Activated CD4-positive, alpha-beta T cell treated with anti-CD3 and anti-CD28 coated beads, Interleukin-2, amount 10 ng/mL, durations not matched to agents 24 days and 14 days (primary cell): ENCODE measurements at regions of chr17 and their contacts with region 1.

Region 1: DNA sequence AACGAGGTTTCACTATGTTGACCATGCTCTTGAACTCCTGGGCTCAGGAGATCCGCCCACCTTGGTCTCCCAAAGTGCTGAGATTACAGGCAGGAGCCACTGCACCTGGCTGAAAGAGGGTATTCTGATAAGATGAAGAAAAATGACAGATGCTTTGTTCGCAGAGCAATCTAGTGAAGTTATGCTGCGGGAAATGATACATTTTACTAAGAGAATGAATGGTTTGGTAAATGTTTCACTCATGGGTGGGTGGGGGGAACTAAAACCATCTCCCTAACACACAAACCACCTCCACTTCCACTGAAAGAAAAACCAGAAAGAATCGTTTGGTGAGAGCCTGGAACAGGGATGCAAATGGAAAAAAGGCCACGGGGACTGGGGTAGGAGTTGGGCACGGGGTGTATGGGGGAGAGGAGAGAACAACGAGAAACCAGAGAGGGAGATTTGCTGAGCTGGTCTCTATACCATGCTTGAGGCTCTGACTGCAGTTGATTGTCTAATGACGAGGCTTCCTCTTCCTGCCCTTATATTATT is 19.0 kb upstream of the XYLT2 start:
- DNase-seq: no peak
- H3K4me3 Mint-ChIP-seq: no peak overlapping the region
- H3K27ac Mint-ChIP-seq: peak overlapping the region; percentile 73
- H3K4me1 Mint-ChIP-seq: peaks cover 7% of the 10 kb centered on the region
- H3K27me3 Mint-ChIP-seq: no peaks in the 10 kb centered on the region

Region 2: DNA sequence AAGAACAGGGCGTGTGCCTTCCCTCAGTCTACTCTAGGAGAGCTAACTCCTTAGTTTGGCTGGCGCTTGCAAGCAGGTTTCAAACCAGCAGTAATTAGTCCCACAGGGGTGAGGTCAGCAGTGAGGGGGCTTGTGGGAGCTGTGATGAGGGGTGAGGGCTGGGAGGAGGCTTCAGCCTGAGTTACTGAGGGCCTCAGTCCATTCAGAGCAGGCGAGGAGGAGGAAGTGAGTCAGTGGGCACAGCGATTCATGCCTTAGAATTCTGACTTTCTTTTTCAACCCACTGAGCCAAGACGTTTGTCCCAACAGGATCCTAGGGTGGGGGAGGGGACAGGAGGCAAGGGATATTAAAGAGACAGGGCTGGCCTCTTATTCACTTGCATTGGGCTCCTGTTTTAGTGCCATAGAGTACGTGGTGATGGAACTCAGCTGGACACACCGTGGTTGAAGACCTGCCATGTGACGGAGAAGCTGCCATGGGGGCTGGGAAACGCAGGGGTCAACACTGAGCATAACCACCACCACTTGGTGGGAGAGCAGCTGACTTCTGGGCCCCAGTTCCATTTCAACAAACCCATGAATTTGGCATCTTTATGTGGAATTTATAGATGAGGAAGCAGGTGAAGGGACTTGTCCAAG is 279.3 kb before region 1 on chr17:
- intact Hi-C with region 1: no loop called
- DNase-seq: no peak
- H3K4me3 Mint-ChIP-seq: no peak overlapping the region
- H3K27ac Mint-ChIP-seq: no peak overlapping the region
- H3K4me1 Mint-ChIP-seq: peaks cover 35% of the 10 kb centered on the region
- H3K27me3 Mint-ChIP-seq: peaks cover 3% of the 10 kb centered on the region

Region 3: GRCh38 chr17:50311112-50311460 is 15.8 kb before region 1 on chr17:
- intact Hi-C with region 1: loop called (anchors 1 kb)
- DNase-seq: no peak
- H3K4me3 Mint-ChIP-seq: no peak overlapping the region
- H3K27ac Mint-ChIP-seq: peak overlapping the region; percentile 95
- H3K4me1 Mint-ChIP-seq: peaks cover 21% of the 10 kb centered on the region
- H3K27me3 Mint-ChIP-seq: peaks cover 2% of the 10 kb centered on the region

Region 4: DNA sequence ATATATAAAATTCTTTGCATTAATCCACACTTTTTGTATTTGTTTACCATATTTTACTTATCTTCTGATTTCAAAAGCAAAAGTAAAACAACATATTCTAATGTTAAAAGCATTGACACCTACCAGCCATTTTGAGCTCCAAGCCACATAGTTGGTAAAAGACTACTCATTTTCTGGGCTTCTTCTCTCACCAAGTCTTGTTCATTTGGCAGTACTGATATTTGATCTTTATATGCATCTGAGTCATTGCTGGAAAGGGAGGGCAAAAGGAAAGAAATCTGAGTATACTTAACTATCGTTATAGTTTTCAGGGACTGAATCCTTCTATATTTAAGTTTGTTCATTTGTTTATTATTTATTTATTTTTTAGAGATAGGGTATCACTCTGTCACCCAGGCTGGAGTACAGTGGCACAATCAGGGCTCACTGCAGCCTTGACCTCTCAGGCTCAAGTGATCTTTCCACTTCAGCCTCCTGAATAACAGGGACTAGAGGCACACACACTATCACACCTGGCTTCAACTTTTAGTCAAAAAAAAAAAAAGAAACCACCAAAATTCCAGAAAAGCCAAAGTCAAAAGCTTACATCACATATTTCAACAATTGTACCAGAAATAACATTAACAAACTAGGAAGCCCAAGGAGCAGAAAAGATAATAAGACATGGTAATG is 660.2 kb after region 1 on chr17:
- intact Hi-C with region 1: no loop called
- DNase-seq: no peak
- H3K4me3 Mint-ChIP-seq: no peak overlapping the region
- H3K27ac Mint-ChIP-seq: peak overlapping the region; percentile 67
- H3K4me1 Mint-ChIP-seq: peaks cover 3% of the 10 kb centered on the region
- H3K27me3 Mint-ChIP-seq: no peaks in the 10 kb centered on the region